Activated CD4-positive, alpha-beta T cell treated with anti-CD3 and anti-CD28 coated beads for 36 hours (primary cell): ENCODE measurements at regions of chr2 and their contacts with region 1.

Region 1: GRCh38 chr2:231514103-231514950 is 15.9 kb downstream of the NMUR1 start:
- DNase-seq: peak; percentile 99
- ATAC-seq: peak; percentile 99
- H3K4me3 Mint-ChIP-seq: peak overlapping the region; percentile 83
- H3K27ac Mint-ChIP-seq: peak overlapping the region; percentile 95
- H3K4me1 Mint-ChIP-seq: peaks cover 13% of the 10 kb centered on the region
- H3K27me3 Mint-ChIP-seq: no peaks in the 10 kb centered on the region

Region 2: GRCh38 chr2:231198291-231199173 is 315.8 kb before region 1 on chr2 and contains the start of gene ARMC9:
- CTCF ChIA-PET with region 1: no interaction called
- POLR2A ChIA-PET with region 1: no interaction called
- intact Hi-C with region 1: loop called in 1 of 2 experiments (anchors 1 kb)
- DNase-seq: peak; percentile 84
- ATAC-seq: peak; percentile 98
- H3K4me3 Mint-ChIP-seq: peak within 1 kb of the TSS; percentile 89
- H3K27ac Mint-ChIP-seq: peak within 1 kb of the TSS; percentile 74
- H3K4me1 Mint-ChIP-seq: peaks cover 7% of the 10 kb centered on the region
- H3K27me3 Mint-ChIP-seq: peaks cover 9% of the 10 kb centered on the region
- total RNA-seq, gene ARMC9: 2.3 to 2.5 TPM

Region 3: DNA sequence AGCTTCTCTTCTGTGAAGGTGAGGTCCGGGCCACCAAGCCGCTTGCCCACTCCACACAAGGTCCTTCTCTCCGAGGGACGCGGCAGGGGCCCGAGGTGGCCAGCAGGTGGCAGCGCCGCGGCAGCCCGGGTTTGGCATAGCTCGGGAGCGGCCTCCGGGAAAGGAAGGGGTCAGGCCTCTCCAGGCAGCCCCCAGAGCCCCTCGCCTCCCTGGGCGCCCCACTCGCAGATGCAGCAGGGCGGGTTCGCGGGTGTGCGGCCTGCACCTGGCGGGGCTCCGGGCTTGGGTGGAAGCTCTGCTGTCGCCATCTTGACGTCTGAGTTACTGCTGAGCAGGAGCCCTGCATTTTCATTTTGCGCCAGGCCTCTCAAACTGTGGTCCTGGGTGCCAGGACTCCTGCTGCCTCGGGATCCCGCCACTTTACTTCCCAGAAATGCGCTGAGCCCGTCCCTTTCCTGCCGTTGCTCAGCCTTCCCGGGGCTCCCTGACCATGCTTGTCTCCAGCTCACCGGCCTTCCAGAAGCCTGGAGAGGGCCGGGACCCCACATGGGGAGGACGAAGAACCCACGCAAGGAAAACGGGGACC is 31.4 kb before region 1 on chr2:
- CTCF ChIA-PET with region 1: interaction called, 12 read pairs
- POLR2A ChIA-PET with region 1: interaction called, 3 read pairs
- intact Hi-C with region 1: loop called (anchors 1 to 2 kb)
- DNase-seq: peak; percentile 85
- ATAC-seq: peak; percentile 83
- H3K4me3 Mint-ChIP-seq: peak overlapping the region; percentile 79
- H3K27ac Mint-ChIP-seq: peak overlapping the region; percentile 87
- H3K4me1 Mint-ChIP-seq: peaks cover 7% of the 10 kb centered on the region
- H3K27me3 Mint-ChIP-seq: no peaks in the 10 kb centered on the region

Region 4: DNA sequence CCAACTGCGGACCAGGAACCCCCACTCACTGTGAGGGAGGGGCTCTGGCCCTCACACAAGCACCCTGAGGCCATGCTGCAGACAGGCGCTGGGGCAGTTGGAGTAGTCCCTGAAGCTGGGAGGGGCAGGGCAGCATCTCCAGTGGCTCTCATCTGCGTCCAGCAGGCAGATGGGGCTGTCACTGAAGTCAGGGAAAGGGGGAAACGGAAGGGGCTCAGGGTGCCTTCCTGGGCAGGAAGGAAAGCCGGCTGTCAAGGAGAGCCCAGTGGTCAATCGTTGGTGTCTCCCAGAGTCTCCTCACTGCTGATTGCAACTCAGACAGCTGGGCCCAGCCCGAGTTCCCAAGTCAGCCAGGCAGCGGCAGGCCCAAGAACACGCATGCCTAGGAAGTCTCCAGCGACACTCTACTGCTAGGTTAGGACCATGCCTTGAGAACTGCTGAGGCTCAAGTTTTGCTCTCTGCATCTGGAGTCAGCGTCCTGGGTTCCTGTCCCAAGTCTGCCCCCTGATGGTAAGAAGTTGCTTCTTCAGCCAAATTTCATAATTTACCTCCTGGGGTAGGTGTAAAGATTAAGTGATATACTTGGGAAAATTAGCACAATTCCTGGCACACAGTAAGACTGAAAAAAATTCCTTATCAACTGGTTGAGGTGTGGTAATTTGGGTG is 43.4 kb after region 1 on chr2:
- CTCF ChIA-PET with region 1: interaction called, 18 read pairs
- POLR2A ChIA-PET with region 1: no interaction called
- intact Hi-C with region 1: loop called (anchors 1 kb)
- DNase-seq: peak; percentile 73
- ATAC-seq: peak; percentile 98
- H3K4me3 Mint-ChIP-seq: no peak overlapping the region
- H3K27ac Mint-ChIP-seq: no peak overlapping the region
- H3K4me1 Mint-ChIP-seq: peaks cover 12% of the 10 kb centered on the region
- H3K27me3 Mint-ChIP-seq: peaks cover 3% of the 10 kb centered on the region

Region 5: DNA sequence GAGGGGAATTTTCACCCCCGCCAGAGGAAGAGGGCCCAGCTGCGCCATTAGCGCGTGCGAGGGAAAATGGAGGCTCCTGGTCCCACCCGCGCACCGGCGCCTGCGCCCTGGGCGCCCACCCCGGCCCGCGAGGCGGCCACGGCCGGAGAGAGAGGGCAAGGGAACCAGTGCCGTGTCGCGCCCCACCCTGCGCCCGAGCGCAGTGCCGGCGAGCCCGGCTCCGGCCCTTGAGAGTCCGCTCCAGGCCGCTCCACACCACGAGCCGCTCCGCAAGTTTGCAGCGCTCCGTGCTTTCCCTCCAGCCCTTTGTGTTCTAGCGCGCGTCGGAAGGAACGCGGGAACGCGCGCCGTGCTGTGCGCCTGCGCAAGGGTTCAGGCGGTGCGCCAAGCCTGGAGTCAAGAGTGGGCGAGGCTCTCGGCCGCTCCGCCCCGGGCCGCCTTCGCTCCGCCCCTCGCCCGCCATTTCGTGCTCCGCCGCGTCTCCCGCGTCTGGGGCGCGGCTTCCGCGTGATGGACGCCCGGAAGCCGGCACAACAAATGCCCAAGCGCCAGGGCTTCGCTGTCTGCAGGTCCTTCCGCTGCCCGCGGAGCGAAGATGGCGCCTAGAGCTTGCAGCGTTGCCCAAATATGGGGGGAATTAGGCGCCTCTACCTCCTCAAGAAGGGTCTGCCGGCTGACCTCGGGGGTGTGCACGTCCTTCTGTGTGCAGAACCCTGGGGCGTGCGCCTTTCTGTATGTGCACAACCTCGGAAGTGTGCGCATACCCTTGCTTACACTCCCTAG is 147.9 kb after region 1 on chr2:
- CTCF ChIA-PET with region 1: no interaction called
- POLR2A ChIA-PET with region 1: interaction called, 3 read pairs
- intact Hi-C with region 1: loop called in 1 of 2 experiments (anchors 1 kb)
- DNase-seq: peak; percentile 98
- ATAC-seq: peak; percentile 92
- H3K4me3 Mint-ChIP-seq: peak overlapping the region; percentile 72
- H3K27ac Mint-ChIP-seq: peak overlapping the region; percentile 96
- H3K4me1 Mint-ChIP-seq: peaks cover 23% of the 10 kb centered on the region
- H3K27me3 Mint-ChIP-seq: no peaks in the 10 kb centered on the region

Region 6: DNA sequence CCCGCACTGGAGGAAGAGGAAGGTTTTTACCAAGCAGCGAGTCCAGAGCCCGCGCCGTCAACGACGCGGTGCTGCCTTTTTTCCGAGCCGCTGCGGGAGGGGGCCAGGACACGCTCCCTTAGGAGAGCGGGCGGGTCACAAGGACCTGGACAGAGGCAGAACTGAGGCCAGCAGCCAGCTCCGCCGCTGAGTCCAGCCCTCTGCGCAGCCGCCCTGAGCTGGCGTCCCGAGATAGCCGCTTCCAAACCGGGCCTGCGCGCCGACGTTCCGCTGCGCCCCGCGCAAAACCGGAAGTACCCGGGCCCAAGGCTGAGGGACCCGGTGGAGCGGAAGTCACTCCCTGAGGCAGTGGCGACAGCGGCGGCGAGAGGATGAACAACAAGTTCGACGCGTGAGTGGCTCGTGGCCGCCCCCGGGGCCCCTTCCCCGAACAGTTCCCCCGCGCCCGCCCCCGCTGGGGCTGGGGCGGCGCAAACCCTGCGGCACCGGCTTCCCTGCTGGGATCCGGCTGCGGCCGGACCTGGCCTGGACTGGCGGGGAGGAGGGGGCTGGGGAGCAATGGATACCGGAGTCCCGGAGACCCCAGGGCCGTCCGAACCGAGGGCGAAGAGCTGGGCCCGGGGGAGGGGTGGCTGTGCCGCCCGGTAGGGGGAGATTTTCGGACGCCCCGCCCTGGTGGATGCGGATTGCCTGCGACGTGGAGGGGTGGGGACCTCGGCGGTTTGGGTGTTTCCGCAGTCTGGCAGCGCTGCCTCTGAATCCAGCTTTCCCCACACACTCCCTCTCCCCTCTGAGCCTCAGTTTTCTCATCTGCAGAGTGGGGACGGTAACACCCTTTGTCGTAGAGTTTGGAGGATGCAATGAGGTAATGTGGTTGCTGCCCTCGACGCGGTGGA is 1036.3 kb after region 1 on chr2 and contains the starts of genes EIF4E2 and TIGD1:
- CTCF ChIA-PET with region 1: no interaction called
- POLR2A ChIA-PET with region 1: no interaction called
- intact Hi-C with region 1: loop called in 1 of 2 experiments (anchors 2 kb)
- DNase-seq: peak; percentile 96
- ATAC-seq: peak; percentile 95
- H3K4me3 Mint-ChIP-seq: peak within 1 kb of the TSS; percentile 98
- H3K27ac Mint-ChIP-seq: peak within 1 kb of the TSS; percentile 100
- H3K4me1 Mint-ChIP-seq: peaks cover 66% of the 10 kb centered on the region
- H3K27me3 Mint-ChIP-seq: no peaks in the 10 kb centered on the region
- total RNA-seq, gene EIF4E2: 57.0 to 68.0 TPM
- total RNA-seq, gene TIGD1: 7.6 to 7.9 TPM